AG04450 (cell line): ENCODE measurements at regions of chr5 and their contacts with region 1.

Region 1: GRCh38 chr5:111550279-111551020 is 38.1 kb upstream of the STARD4 start:
- DNase-seq: peak; percentile 94
- H3K4me3 ChIP-seq: no peak overlapping the region
- H3K27ac ChIP-seq: no peak overlapping the region
- H3K27me3 ChIP-seq: no peaks in the 10 kb centered on the region
- CTCF ChIP-seq: peak; percentile 66

Region 2: GRCh38 chr5:111537141-111538024 is 13.1 kb before region 1 on chr5:
- CTCF ChIA-PET with region 1: interaction called, 62 read pairs
- POLR2A ChIA-PET with region 1: no interaction called
- DNase-seq: no peak
- H3K4me3 ChIP-seq: no peak overlapping the region
- H3K27ac ChIP-seq: no peak overlapping the region
- H3K27me3 ChIP-seq: no peaks in the 10 kb centered on the region
- CTCF ChIP-seq: no peak

Region 3: DNA sequence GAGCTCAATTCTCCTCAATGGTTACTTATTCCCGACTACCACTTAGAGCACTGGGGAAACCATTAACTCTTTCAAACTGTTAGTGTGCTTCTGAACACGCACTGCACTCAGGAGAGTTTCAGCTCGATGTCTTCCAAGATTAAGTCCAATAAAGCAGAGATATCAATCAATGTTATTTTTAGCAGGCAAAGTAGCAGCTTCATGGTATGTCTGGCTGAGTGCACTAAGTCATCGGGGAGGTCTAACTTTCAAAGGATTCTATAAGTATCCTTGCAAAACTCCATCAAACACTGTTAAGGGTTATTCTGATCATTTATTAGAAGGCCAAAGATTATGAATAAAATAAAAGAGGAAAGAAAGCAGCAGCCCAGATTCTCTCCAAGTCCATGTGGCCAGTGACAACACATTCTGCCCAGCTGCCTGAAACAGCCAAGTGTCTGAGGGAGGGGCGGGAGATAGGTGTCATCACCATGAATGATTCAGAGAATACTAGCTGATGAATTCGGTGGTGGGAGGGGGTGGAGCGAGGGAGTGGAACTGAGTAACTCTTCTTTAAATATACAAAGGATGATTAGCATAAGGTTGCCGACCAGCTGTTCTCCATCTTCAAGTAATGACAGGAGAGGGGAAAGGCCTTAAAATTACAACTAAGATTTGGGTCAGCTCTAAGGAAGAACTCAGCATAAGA is 185.3 kb after region 1 on chr5:
- CTCF ChIA-PET with region 1: interaction called, 14 read pairs
- POLR2A ChIA-PET with region 1: interaction called, 4 read pairs
- DNase-seq: peak; percentile 92
- H3K4me3 ChIP-seq: no peak overlapping the region
- H3K27ac ChIP-seq: peak overlapping the region; percentile 33
- H3K27me3 ChIP-seq: no peaks in the 10 kb centered on the region
- CTCF ChIP-seq: no peak

Region 4: GRCh38 chr5:111742177-111742994 is 191.9 kb after region 1 on chr5:
- CTCF ChIA-PET with region 1: interaction called, 11 read pairs
- POLR2A ChIA-PET with region 1: no interaction called
- DNase-seq: peak; percentile 88
- H3K4me3 ChIP-seq: no peak overlapping the region; the same call in 1 of the 2 replicates
- H3K27ac ChIP-seq: peak overlapping the region; percentile 68
- H3K27me3 ChIP-seq: no peaks in the 10 kb centered on the region
- CTCF ChIP-seq: no peak

Region 5: DNA sequence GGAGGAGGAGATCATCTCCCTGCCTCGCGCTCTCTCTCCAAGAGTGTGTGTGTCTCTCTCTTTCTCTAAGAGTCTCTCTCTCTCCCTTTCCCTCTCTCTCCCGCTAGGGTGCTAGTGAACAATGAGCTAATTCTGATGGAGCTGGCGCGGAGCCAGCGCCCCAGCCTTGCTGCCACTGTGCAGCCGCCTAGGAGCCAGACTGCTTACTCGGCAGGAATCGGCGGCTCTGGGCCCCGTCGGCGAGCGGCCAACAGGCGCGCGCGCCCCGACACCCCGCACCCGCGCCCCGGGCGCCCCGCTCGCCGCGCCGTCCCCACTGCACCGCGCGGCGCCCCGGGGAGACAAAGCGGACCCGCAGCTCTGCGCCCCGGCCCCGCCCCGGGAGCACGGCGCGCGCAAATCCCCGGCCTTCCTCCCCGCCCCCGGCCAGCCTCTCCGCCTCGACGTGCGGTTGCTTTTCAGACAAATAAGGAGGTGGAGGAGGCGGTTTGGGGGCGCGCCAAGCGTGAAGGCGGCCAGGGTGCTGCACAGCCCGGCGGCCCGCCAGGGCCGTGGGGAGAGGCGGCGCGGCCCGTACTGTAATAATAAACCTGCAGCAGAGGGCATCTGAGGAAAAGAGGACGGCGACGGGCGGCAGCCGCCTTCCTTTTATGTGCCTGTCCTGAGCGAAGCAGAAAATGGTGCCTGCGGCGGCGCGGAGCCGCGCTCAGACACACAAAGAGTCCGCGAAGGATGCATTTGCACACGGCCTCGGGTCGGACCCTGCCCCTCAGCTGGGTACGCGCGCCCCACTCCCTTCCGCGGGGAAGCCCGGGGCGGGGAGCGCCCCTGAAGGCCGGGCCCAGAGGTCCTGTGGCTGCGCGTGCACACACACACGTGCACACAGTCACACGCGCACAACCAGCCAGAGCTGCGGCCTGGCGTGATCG is 207.2 kb after region 1 on chr5:
- CTCF ChIA-PET with region 1: interaction called, 13 read pairs
- POLR2A ChIA-PET with region 1: interaction called, 15 read pairs
- DNase-seq: peak; percentile 89
- H3K4me3 ChIP-seq: peak overlapping the region; percentile 87
- H3K27ac ChIP-seq: peak overlapping the region; percentile 96
- H3K27me3 ChIP-seq: no peaks in the 10 kb centered on the region
- CTCF ChIP-seq: peak; percentile 65

Region 6: GRCh38 chr5:112146323-112147226 is 596.1 kb after region 1 on chr5:
- CTCF ChIA-PET with region 1: interaction called, 58 read pairs
- POLR2A ChIA-PET with region 1: no interaction called
- DNase-seq: peak; percentile 64
- H3K4me3 ChIP-seq: no peak overlapping the region
- H3K27ac ChIP-seq: peak overlapping the region; percentile 57
- H3K27me3 ChIP-seq: no peaks in the 10 kb centered on the region
- CTCF ChIP-seq: peak; percentile 76

Region 7: DNA sequence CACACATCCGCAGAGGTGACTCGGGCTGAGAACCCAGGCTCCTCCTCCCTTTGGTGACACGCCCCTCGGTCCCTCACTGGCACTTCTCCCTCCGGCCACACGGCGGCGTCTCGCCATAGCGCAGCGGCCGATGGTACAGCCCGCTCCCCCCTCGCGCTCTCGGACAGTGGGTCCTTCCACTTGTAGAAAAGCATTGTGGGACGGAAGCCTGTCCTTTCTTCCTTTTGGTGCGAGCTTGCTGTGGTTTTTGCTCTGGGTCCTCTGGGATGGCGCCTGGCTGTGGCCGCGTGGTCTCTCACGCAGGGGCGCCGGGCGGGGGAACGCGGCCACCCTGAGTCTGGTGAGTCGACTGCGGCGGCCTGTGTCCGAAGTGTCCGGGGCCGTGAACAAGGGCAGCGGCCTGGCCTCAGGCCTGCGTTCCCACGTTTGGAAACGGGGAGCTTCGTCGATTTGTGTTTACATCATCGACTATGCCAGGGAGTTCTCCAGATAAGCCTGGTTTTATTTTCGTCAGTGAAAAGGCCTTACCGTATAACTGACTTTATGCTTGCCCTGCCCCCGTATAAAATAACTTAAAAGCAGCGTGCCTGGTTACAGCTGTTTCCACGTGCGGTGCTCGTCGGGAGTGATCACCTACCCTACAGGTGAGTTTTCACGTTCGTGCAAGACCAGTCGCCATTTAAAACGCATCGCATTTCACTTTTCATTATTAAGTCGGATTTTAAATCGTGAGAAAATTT is 610.4 kb after region 1 on chr5:
- CTCF ChIA-PET with region 1: interaction called, 12 read pairs
- POLR2A ChIA-PET with region 1: interaction called, 3 read pairs
- DNase-seq: peak; percentile 87
- H3K4me3 ChIP-seq: peak overlapping the region; percentile 97
- H3K27ac ChIP-seq: peak overlapping the region; percentile 83
- H3K27me3 ChIP-seq: no peaks in the 10 kb centered on the region
- CTCF ChIP-seq: peak; percentile 99